IMR-90 (cell line): ENCODE measurements at regions of chr7 and their contacts with region 1.

Region 1: DNA sequence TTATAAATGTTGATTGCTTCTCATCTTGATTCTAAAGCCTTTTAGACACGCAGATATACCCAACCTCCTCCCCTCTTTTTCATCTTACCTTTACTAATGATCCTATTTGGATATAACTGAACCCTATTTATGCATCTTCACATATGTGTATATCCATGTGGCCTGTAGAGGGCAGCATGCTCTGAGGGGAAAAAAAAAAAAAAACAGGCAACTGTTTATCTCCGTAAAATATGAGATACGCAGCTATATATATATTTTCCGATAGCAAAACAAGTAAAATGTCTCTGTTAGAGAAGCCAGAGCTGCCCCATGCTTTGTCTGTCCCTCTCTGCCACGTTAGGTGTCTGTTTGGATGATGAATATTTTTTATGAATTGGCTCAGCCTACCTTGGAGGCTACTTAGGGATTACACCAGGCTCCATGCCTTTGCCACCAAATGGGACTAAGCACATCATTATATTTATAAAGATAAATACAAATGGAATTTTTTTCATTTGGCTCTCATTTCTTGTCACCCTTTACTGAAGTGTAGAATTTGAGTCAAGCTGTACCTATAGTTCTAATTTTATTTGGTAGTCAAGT is 174.8 kb upstream of the FZD1 start:
- DNase-seq: peak; percentile 48
- ATAC-seq: peak; percentile 74
- H3K4me3 ChIP-seq: peak overlapping the region; percentile 33; the same call in 1 of the 2 replicates
- H3K27ac ChIP-seq: no peak overlapping the region
- H3K4me1 ChIP-seq: no peaks in the 10 kb centered on the region
- H3K27me3 ChIP-seq: no peaks in the 10 kb centered on the region
- CTCF ChIP-seq: peak; percentile 73
- POLR2A ChIP-seq: no peak
- RAD21 ChIP-seq: peak; percentile 75

Region 2: GRCh38 chr7:90877201-90877600 is 212.3 kb before region 1 on chr7:
- CTCF ChIA-PET with region 1: no interaction called
- POLR2A ChIA-PET with region 1: no interaction called
- dilution Hi-C with region 1: no loop called
- in situ Hi-C with region 1: no loop called
- intact Hi-C with region 1: no loop called
- DNase-seq: no peak
- ATAC-seq: no peak
- H3K4me3 ChIP-seq: no peak overlapping the region
- H3K27ac ChIP-seq: no peak overlapping the region
- H3K4me1 ChIP-seq: no peaks in the 10 kb centered on the region
- H3K27me3 ChIP-seq: no peaks in the 10 kb centered on the region
- CTCF ChIP-seq: no peak
- POLR2A ChIP-seq: no peak
- RAD21 ChIP-seq: no peak

Region 3: GRCh38 chr7:91140984-91141383 is 51.5 kb after region 1 on chr7:
- CTCF ChIA-PET with region 1: no interaction called
- POLR2A ChIA-PET with region 1: no interaction called
- dilution Hi-C with region 1: no loop called
- in situ Hi-C with region 1: no loop called
- intact Hi-C with region 1: no loop called
- DNase-seq: no peak
- ATAC-seq: no peak
- H3K4me3 ChIP-seq: no peak overlapping the region
- H3K27ac ChIP-seq: no peak overlapping the region
- H3K4me1 ChIP-seq: no peaks in the 10 kb centered on the region; the same call in 1 of the 2 replicates
- H3K27me3 ChIP-seq: no peaks in the 10 kb centered on the region
- CTCF ChIP-seq: no peak
- POLR2A ChIP-seq: no peak
- RAD21 ChIP-seq: no peak

Region 4: GRCh38 chr7:91383053-91383904 is 293.8 kb after region 1 on chr7:
- CTCF ChIA-PET with region 1: no interaction called
- POLR2A ChIA-PET with region 1: no interaction called
- dilution Hi-C with region 1: no loop called
- in situ Hi-C with region 1: no loop called
- intact Hi-C with region 1: loop called (anchors 10 kb)
- DNase-seq: peak; percentile 64
- ATAC-seq: peak; percentile 84
- H3K4me3 ChIP-seq: no peak overlapping the region
- H3K27ac ChIP-seq: peak overlapping the region; percentile 89; the same call in 1 of the 2 replicates
- H3K4me1 ChIP-seq: peaks cover 3% of the 10 kb centered on the region; the same call in 1 of the 2 replicates
- H3K27me3 ChIP-seq: no peaks in the 10 kb centered on the region
- CTCF ChIP-seq: no peak
- POLR2A ChIP-seq: no peak
- RAD21 ChIP-seq: no peak

Region 5: DNA sequence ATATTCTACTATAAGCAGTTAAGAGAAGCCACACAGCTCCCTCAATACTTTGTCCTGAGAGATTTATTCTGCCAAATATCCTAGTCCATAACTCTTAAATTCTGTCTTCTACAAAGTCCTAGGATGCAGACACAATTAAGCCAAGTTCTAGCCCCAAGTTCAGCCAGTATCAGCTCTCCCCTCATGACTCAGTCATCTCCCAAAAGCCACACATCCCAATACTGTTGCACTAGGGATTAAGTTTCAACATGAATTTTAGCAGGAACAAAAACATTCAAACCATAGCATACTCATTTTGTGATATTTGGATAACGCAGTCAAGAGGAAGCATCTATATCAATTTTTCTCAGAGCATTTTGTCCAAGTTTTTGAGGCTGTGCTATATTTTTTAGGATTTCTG is 452.2 kb after region 1 on chr7:
- CTCF ChIA-PET with region 1: no interaction called
- POLR2A ChIA-PET with region 1: no interaction called
- dilution Hi-C with region 1: no loop called
- in situ Hi-C with region 1: no loop called
- intact Hi-C with region 1: loop called (anchors 10 kb)
- DNase-seq: no peak
- ATAC-seq: no peak
- H3K4me3 ChIP-seq: no peak overlapping the region
- H3K27ac ChIP-seq: no peak overlapping the region
- H3K4me1 ChIP-seq: no peaks in the 10 kb centered on the region
- H3K27me3 ChIP-seq: no peaks in the 10 kb centered on the region
- CTCF ChIP-seq: no peak
- POLR2A ChIP-seq: no peak
- RAD21 ChIP-seq: no peak

Region 6: DNA sequence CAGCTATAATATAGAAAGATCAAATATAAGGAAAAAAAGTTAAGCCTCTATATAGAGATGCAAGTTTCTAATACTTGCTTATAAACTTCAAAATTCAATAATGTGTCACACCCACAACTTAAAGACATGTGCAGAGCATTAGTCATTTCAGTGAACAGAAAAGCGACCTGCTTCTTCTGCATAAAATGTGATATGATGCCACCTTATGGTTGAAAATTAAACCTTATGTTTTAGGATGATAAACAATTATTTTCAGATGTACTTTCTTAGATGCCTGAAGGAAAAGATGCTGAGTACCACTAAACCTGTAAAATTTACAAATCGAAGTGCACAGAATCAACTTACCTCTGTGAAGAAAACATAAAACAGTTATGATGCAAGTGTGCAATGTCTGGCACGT is 695.0 kb after region 1 on chr7:
- CTCF ChIA-PET with region 1: no interaction called
- POLR2A ChIA-PET with region 1: no interaction called
- dilution Hi-C with region 1: no loop called
- in situ Hi-C with region 1: loop called (anchors 10 kb)
- intact Hi-C with region 1: no loop called
- DNase-seq: peak; percentile 61
- ATAC-seq: peak; percentile 70
- H3K4me3 ChIP-seq: no peak overlapping the region
- H3K27ac ChIP-seq: no peak overlapping the region
- H3K4me1 ChIP-seq: no peaks in the 10 kb centered on the region
- H3K27me3 ChIP-seq: no peaks in the 10 kb centered on the region; the same call in none of the 2 replicates
- CTCF ChIP-seq: peak; percentile 48
- POLR2A ChIP-seq: no peak
- RAD21 ChIP-seq: peak; percentile 62

Region 7: GRCh38 chr7:91940572-91941341 is 851.3 kb after region 1 on chr7 and contains the start of gene AKAP9:
- CTCF ChIA-PET with region 1: no interaction called
- POLR2A ChIA-PET with region 1: no interaction called
- dilution Hi-C with region 1: no loop called
- in situ Hi-C with region 1: no loop called
- intact Hi-C with region 1: loop called (anchors 10 kb)
- DNase-seq: peak; percentile 57
- ATAC-seq: peak; percentile 86
- H3K4me3 ChIP-seq: peak within 1 kb of the TSS; percentile 80
- H3K27ac ChIP-seq: peak within 1 kb of the TSS; percentile 98
- H3K4me1 ChIP-seq: peaks cover 2% of the 10 kb centered on the region; the same call in 1 of the 2 replicates
- H3K27me3 ChIP-seq: no peaks in the 10 kb centered on the region
- CTCF ChIP-seq: no peak
- POLR2A ChIP-seq: peak; percentile 70; the same call in 1 of the 2 replicates
- RAD21 ChIP-seq: no peak
- total RNA-seq, gene AKAP9: 25.3 and 49.4 TPM in 2 replicates